ENCODE measurements at regions of chr16 and their contacts with region 1.

Region 1: GRCh38 chr16:61419791-61420190 is 616.4 kb downstream of the CDH8 start:
- DNase-seq: no peak
- ATAC-seq: no peak
- H3K4me3 ChIP-seq: no peak overlapping the region
- H3K27ac ChIP-seq: no peak overlapping the region
- H3K4me1 ChIP-seq: no peaks in the 10 kb centered on the region
- H3K27me3 ChIP-seq: no peaks in the 10 kb centered on the region
- CTCF ChIP-seq: no peak

Region 2: DNA sequence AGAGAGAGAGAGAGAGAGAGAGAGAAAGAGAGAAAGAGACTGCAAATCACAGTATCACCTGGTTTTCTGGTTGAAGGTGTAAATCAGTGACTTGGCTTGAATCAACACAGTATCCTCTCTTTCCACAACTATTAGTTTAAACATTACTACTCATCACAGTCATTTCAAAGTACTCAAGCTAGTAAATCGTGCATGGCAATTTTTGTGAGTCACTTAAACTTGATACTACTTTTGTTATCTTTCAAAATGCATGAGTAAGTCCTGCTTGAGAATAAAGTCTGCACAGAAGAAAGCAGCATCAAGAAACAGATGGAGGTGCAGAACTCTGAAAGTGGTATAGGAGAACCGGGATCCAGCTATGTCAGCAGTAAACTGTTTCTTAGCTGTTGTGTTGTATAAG is 81.1 kb after region 1 on chr16:
- intact Hi-C with region 1: loop called (anchors 5 kb)
- DNase-seq: no peak
- ATAC-seq: no peak
- H3K4me3 ChIP-seq: no peak overlapping the region
- H3K27ac ChIP-seq: no peak overlapping the region
- H3K4me1 ChIP-seq: no peaks in the 10 kb centered on the region
- H3K27me3 ChIP-seq: no peaks in the 10 kb centered on the region
- CTCF ChIP-seq: no peak

Region 3: DNA sequence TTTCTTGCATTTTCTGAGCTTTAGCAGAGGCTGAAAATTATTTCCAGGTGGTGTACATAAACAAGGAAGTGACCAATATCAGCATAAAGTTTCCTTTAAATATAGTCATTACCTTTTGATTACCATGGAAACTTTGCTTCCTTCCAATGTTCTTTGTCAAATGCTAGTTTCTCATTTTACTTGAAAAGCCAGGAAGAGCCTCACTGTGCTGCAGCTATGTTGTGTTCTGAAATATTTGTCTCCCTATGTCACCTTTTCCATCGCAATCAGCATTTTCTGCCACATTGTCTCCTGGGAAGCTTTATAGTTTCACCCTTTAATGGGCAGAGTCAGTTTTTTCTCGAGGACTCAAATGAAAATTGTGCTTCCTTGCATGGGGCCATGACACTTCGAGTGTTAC is 120.4 kb after region 1 on chr16:
- intact Hi-C with region 1: no loop called
- DNase-seq: no peak
- ATAC-seq: no peak
- H3K4me3 ChIP-seq: no peak overlapping the region
- H3K27ac ChIP-seq: no peak overlapping the region
- H3K4me1 ChIP-seq: no peaks in the 10 kb centered on the region
- H3K27me3 ChIP-seq: no peaks in the 10 kb centered on the region
- CTCF ChIP-seq: no peak

Measured in upper lobe of right lung (tissue), 1 donor.